K562 (cell line): ENCODE measurements at regions of chr4 and their contacts with region 1.

Region 1: DNA sequence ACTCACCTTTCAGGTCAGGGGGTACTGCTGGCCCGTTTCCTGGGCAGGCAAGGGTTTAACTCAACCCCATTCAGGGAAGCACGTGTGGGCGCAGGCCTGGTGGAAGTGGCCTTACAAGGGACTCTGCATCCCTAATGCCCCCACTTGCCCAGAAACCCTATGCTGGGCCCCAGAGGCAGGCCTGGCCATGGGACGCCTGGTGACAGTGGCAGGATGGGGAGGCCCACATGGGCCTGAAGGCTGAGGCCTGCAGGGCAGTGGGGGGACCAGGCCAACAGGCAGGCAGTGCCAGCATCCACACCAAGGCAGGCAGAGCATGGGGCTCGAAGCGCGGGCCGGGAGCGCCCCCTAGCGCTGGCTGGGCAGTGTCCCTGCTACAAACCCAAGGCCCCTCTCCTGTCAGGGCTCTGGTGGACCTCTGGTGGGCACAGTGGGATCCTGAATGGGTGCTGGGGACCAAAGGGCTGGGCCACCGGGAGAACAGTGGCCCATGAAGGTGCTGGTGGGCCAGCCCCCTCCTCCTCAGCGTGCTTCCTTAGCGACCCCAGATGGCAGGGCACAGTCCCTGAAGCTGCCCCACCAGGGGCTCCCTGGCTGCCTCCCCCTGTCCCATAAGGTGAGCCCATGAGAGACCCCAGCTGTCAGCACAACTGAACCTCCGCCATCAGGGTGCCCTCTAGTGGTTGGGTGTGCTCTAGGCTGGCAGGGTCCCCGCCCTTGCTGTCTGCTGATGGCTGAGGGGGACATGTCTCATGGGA is 16.8 kb downstream of the FGFR3 start:
- DNase-seq: peak; percentile 75 to 84 (median 82)
- ATAC-seq: peak; percentile 94
- H3K4me3 ChIP-seq: no peak overlapping the region
- H3K27ac ChIP-seq: no peak overlapping the region
- H3K4me1 ChIP-seq: peaks cover 0 to 41% of the 10 kb centered on the region in 2 experiments; a peak in 2 of 5 replicates
- H3K27me3 ChIP-seq: no peaks in the 10 kb centered on the region
- CTCF ChIP-seq: peak; percentile 92 to 98 (median 94)
- EP300 ChIP-seq: no peak
- POLR2A ChIP-seq: peak; percentile 26; the same call in 1 of the 2 replicates
- RAD21 ChIP-seq: peak; percentile 87 to 96

Region 2: DNA sequence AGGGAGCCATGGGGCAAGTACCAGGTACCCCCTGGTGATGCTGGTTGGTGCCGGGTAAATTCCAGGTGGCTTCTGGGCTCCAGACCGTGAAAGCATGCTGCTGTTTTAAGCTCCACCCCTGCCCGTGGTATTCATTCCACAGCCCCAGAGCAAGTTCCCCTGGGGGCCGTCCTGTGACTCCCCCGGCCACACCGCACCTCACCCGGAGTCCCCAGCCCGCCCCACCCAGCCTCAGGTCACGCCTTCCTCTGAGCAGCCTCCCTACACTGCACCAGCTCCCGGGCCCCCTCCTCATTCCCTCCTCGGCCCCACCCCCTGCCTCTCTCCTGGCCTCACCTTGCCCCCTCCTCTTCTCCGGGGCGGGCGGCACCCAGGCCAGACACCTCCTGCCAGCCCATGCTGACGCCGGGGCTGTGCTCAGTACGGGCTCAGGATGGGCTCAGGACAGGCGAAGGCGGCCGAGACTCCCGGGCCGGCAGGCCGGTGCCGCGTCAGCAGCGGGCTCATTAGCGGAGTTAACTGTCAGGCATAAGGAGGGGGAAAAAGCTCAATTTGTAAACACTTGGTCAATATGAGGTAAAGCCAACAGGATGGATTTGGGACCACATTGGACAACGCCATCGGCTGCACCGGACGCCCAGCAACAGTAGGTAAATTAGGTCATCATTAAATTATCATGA is 253.3 kb before region 1 on chr4:
- CTCF ChIA-PET with region 1: no interaction called
- POLR2A ChIA-PET with region 1: no interaction called
- in situ Hi-C with region 1: no loop called
- intact Hi-C with region 1: no loop called
- DNase-seq: no peak
- ATAC-seq: no peak
- H3K4me3 ChIP-seq: no peak overlapping the region
- H3K27ac ChIP-seq: no peak overlapping the region
- H3K4me1 ChIP-seq: peaks cover 0 to 31% of the 10 kb centered on the region in 2 experiments; a peak in 2 of 5 replicates
- H3K27me3 ChIP-seq: peaks cover 51 to 75% of the 10 kb centered on the region in 2 experiments
- CTCF ChIP-seq: no peak
- EP300 ChIP-seq: no peak
- POLR2A ChIP-seq: no peak
- RAD21 ChIP-seq: no peak

Region 3: GRCh38 chr4:1654216-1654955 is 155.5 kb before region 1 on chr4:
- CTCF ChIA-PET with region 1: no interaction called
- POLR2A ChIA-PET with region 1: no interaction called
- in situ Hi-C with region 1: no loop called
- intact Hi-C with region 1: no loop called
- DNase-seq: no peak
- ATAC-seq: peak; percentile 54; the same call in 2 of the 3 replicates
- H3K4me3 ChIP-seq: no peak overlapping the region
- H3K27ac ChIP-seq: no peak overlapping the region
- H3K4me1 ChIP-seq: peaks cover 0 to 41% of the 10 kb centered on the region in 2 experiments; a peak in 2 of 5 replicates
- H3K27me3 ChIP-seq: peaks cover 0 to 19% of the 10 kb centered on the region in 2 experiments; a peak in 3 of 5 replicates
- CTCF ChIP-seq: no peak
- EP300 ChIP-seq: no peak
- POLR2A ChIP-seq: no peak
- RAD21 ChIP-seq: no peak

Region 4: DNA sequence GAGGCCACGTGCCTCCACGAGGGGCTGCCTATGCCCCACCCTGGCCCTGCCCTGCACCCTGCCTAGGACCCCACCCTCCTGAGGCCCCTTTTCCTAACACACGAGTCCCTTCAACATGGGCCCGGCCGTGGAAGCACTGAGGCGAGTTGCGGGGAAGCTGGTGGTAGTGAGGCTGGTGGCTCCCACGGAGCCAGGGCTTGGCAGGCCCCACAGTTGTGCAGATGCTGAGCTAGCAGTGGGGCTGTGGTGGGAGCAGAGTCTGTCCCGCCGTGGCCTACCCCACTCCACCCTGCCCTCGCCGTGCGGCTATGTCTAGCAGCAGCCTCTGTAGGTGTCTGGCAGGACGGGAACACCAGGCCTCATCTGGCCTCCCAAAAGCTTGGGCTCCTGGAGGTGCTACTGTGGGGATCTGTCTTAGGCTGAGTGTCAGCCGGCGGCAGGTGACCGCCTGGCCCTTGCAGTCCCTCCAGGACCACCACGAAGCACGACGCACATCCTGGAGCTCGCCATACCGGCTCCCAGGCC is 69.8 kb before region 1 on chr4:
- CTCF ChIA-PET with region 1: interaction called, 94 read pairs
- POLR2A ChIA-PET with region 1: interaction called, 3 read pairs
- in situ Hi-C with region 1: loop called (anchors 5 kb)
- intact Hi-C with region 1: no loop called
- DNase-seq: no peak
- ATAC-seq: no peak
- H3K4me3 ChIP-seq: no peak overlapping the region
- H3K27ac ChIP-seq: no peak overlapping the region
- H3K4me1 ChIP-seq: peaks cover 0 to 24% of the 10 kb centered on the region in 2 experiments; a peak in 2 of 5 replicates
- H3K27me3 ChIP-seq: no peaks in the 10 kb centered on the region
- CTCF ChIP-seq: no peak
- EP300 ChIP-seq: no peak
- POLR2A ChIP-seq: no peak
- RAD21 ChIP-seq: no peak

Region 5: DNA sequence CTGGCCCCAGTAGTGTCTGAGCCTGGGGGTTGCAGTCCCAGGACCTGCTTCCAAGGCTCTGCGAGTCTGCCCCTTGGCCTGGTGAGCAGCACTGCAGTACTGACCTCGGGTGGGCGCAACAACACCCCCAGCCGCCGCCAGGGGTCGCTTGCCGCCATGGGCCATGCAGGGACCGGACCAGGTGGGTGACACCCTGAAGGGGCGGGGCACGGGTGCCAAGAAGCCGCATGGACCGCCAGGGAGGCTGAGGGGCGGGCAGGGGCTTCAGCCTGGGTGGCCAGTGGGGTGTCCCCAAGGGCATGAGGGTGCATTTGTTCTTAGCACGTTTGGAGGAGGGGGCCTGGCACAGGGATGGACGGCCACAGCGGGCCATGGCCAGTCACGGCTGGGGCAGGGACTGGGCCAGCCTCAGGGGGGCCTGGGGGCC is 63.7 kb before region 1 on chr4:
- CTCF ChIA-PET with region 1: interaction called, 94 read pairs
- POLR2A ChIA-PET with region 1: interaction called, 10 read pairs
- in situ Hi-C with region 1: loop called (anchors 5 kb)
- intact Hi-C with region 1: loop called (anchors 1 kb)
- DNase-seq: peak; percentile 83 to 90 (median 87)
- ATAC-seq: peak; percentile 89
- H3K4me3 ChIP-seq: no peak overlapping the region
- H3K27ac ChIP-seq: no peak overlapping the region
- H3K4me1 ChIP-seq: peaks cover 0 to 73% of the 10 kb centered on the region in 2 experiments; a peak in 2 of 5 replicates
- H3K27me3 ChIP-seq: no peaks in the 10 kb centered on the region
- CTCF ChIP-seq: peak; percentile 89 to 99 (median 94)
- EP300 ChIP-seq: no peak
- POLR2A ChIP-seq: no peak
- RAD21 ChIP-seq: peak; percentile 52 to 79

Region 6: GRCh38 chr4:1763550-1764080 is 46.3 kb before region 1 on chr4:
- CTCF ChIA-PET with region 1: interaction called, 4 read pairs
- POLR2A ChIA-PET with region 1: interaction called, 3 read pairs
- in situ Hi-C with region 1: no loop called
- intact Hi-C with region 1: loop called (anchors 1 kb)
- DNase-seq: peak; percentile 62 to 85 (median 70)
- ATAC-seq: peak; percentile 83
- H3K4me3 ChIP-seq: no peak overlapping the region
- H3K27ac ChIP-seq: no peak overlapping the region
- H3K4me1 ChIP-seq: peaks cover 2 to 85% of the 10 kb centered on the region in 2 experiments; a peak in 3 of 5 replicates
- H3K27me3 ChIP-seq: no peaks in the 10 kb centered on the region
- CTCF ChIP-seq: peak; percentile 20 to 59 (median 34); a peak in 4 of 6 replicates
- EP300 ChIP-seq: no peak
- POLR2A ChIP-seq: no peak
- RAD21 ChIP-seq: no peak

Region 7: DNA sequence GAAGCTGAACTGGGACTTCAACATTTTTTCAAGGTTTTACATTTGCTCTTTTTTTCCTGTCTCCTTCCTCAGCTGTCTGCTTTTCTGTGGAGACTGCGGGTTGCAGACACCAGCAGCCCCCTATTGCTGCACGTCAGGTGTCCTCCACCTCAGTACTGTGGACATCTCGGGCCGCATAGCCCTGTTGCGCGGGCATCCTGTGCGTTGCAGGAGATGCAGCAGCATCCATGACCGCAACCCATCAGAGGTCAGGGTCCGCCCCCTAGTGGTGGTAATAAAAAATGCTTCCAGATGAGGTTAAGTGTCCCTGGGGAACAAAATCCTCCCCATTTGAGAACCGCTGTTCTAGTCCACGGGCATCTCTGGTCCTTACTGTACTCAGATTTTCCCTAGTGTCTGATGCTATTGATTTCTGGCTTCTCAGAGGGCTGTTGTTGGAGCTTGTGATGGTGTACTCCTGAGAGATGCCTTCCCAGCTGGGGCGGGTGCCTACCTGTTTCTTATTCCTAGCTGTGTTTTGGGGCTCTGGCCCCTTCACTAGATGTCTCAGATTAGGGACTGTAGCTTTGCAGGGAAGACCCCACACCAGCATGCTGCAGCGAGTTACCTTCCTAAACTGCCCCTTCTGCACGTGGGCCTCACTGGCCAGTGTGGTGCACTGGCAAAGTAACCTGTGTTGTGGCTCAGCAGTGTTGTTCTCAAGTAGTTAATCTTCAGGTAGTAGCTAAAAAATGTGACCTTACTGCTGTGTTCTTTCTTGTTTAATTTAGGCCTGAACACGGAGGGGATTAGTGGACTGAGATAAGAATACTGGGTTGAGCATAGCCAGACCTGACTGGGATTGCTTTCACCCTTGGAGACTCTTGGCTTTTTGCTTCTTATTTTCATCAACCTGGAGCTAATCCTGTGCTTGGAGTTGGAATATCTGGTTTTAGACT is 89.5 kb after region 1 on chr4:
- CTCF ChIA-PET with region 1: no interaction called
- POLR2A ChIA-PET with region 1: no interaction called
- in situ Hi-C with region 1: loop called (anchors 5 kb)
- intact Hi-C with region 1: loop called (anchors 5 kb)
- DNase-seq: peak; percentile 85 to 87 (median 86)
- ATAC-seq: peak; percentile 95
- H3K4me3 ChIP-seq: no peak overlapping the region
- H3K27ac ChIP-seq: no peak overlapping the region
- H3K4me1 ChIP-seq: peaks cover 5% of the 10 kb centered on the region in 2 experiments; a peak in 4 of 5 replicates
- H3K27me3 ChIP-seq: no peaks in the 10 kb centered on the region
- CTCF ChIP-seq: peak; percentile 81 to 90 (median 88)
- EP300 ChIP-seq: no peak
- POLR2A ChIP-seq: no peak
- RAD21 ChIP-seq: peak; percentile 88 to 90

Region 8: GRCh38 chr4:1910643-1911042 is 100.7 kb after region 1 on chr4:
- CTCF ChIA-PET with region 1: interaction called, 3 read pairs
- POLR2A ChIA-PET with region 1: no interaction called
- in situ Hi-C with region 1: no loop called
- intact Hi-C with region 1: loop called (anchors 5 kb)
- DNase-seq: peak; percentile 34 to 72 (median 48)
- ATAC-seq: peak; percentile 88
- H3K4me3 ChIP-seq: no peak overlapping the region
- H3K27ac ChIP-seq: no peak overlapping the region
- H3K4me1 ChIP-seq: peaks cover 5 to 15% of the 10 kb centered on the region in 2 experiments; a peak in 3 of 5 replicates
- H3K27me3 ChIP-seq: no peaks in the 10 kb centered on the region
- CTCF ChIP-seq: peak; percentile 62 to 75 (median 70)
- EP300 ChIP-seq: no peak
- POLR2A ChIP-seq: no peak
- RAD21 ChIP-seq: peak; percentile 42 to 72; a peak in 3 of 4 replicates